GM12878 (cell line): ENCODE measurements at regions of chr2 and their contacts with region 1.

Region 1: DNA sequence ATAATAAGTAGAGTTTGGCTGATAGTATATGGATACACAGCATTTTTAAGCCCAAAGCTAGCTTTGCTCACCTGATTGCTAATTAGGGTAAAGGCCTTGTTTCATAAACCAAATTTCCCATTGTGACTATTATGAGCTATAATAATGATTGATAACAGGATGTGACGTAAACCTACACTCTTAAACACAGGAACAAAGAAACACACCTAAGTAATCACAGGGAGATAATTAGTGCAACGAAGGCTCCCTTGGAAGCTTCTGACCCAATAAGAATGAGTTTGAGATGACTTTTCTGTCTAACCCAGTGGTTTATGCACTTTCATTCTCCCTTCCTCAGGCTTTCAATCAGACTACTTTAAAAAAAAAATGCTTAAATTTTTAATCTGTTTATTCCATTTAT is 683.2 kb downstream of the SATB2 start:
- DNase-seq: no peak
- ATAC-seq: peak; percentile 84
- H3K4me3 ChIP-seq: no peak overlapping the region
- H3K27ac ChIP-seq: no peak overlapping the region
- H3K4me1 ChIP-seq: no peaks in the 10 kb centered on the region
- H3K27me3 ChIP-seq: no peaks in the 10 kb centered on the region
- CTCF ChIP-seq: no peak
- EP300 ChIP-seq: 0 out of 4 replicates have a peak, but pooled peaks of 1 of the 2 experiments have one; percentile 45
- POLR2A ChIP-seq: no peak
- RAD21 ChIP-seq: no peak

Region 2: DNA sequence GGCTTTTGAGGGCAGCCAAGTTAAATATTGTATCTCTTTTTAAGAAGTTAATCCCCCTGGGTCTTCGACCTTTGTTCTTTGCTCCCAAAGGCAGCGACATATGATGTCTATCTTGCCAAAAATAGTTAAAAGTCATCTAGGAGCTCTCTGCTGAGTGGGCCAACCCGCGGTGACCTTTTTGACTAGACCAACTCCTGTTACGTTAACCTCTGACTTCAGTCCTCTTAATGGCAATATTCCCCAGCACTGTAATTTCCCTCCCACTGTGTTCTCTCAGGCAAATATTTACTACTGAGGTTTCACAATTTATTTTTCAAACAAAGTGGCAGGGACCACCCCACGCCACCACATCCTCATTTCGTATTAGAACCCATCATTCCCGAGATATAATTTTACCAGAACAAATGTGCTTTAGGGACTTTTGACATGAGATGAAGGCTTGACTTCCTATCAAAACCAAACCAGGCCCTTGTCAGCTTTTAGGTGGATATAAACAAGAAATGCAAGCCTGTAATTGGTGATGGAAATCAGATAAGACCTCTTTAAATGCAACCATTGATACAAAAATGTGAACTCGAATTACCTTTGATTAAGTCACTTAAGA is 81.6 kb before region 1 on chr2:
- CTCF ChIA-PET with region 1: interaction called, 4 read pairs
- POLR2A ChIA-PET with region 1: no interaction called
- RAD21 ChIA-PET with region 1: interaction called, 33 read pairs
- SMC1A ChIA-PET with region 1: interaction called, 52 read pairs
- in situ Hi-C with region 1: no loop called
- intact Hi-C with region 1: no loop called
- DNase-seq: no peak
- ATAC-seq: peak; percentile 77
- H3K4me3 ChIP-seq: no peak overlapping the region
- H3K27ac ChIP-seq: no peak overlapping the region
- H3K4me1 ChIP-seq: no peaks in the 10 kb centered on the region
- H3K27me3 ChIP-seq: no peaks in the 10 kb centered on the region
- CTCF ChIP-seq: no peak
- EP300 ChIP-seq: no peak
- POLR2A ChIP-seq: no peak
- RAD21 ChIP-seq: no peak

Region 3: GRCh38 chr2:198706476-198707082 is 68.0 kb before region 1 on chr2:
- CTCF ChIA-PET with region 1: interaction called, 3 read pairs
- POLR2A ChIA-PET with region 1: interaction called, 3 read pairs
- RAD21 ChIA-PET with region 1: interaction called, 16 read pairs
- SMC1A ChIA-PET with region 1: interaction called, 26 read pairs
- in situ Hi-C with region 1: no loop called
- intact Hi-C with region 1: no loop called
- DNase-seq: no peak
- ATAC-seq: no peak
- H3K4me3 ChIP-seq: no peak overlapping the region
- H3K27ac ChIP-seq: no peak overlapping the region
- H3K4me1 ChIP-seq: no peaks in the 10 kb centered on the region
- H3K27me3 ChIP-seq: no peaks in the 10 kb centered on the region
- CTCF ChIP-seq: no peak
- EP300 ChIP-seq: no peak
- POLR2A ChIP-seq: no peak
- RAD21 ChIP-seq: no peak

Region 4: GRCh38 chr2:198749364-198749763 is 25.2 kb before region 1 on chr2:
- CTCF ChIA-PET with region 1: interaction called, 3 read pairs
- POLR2A ChIA-PET with region 1: interaction called, 3 read pairs
- RAD21 ChIA-PET with region 1: interaction called, 4 read pairs
- SMC1A ChIA-PET with region 1: interaction called, 11 read pairs
- in situ Hi-C with region 1: no loop called
- intact Hi-C with region 1: no loop called
- DNase-seq: no peak
- ATAC-seq: no peak
- H3K4me3 ChIP-seq: no peak overlapping the region
- H3K27ac ChIP-seq: no peak overlapping the region
- H3K4me1 ChIP-seq: no peaks in the 10 kb centered on the region
- H3K27me3 ChIP-seq: no peaks in the 10 kb centered on the region
- CTCF ChIP-seq: no peak
- EP300 ChIP-seq: no peak
- POLR2A ChIP-seq: no peak
- RAD21 ChIP-seq: no peak

Region 5: GRCh38 chr2:198788676-198789075 is 14.1 kb after region 1 on chr2:
- CTCF ChIA-PET with region 1: interaction called, 16 read pairs
- POLR2A ChIA-PET with region 1: interaction called, 3 read pairs
- RAD21 ChIA-PET with region 1: interaction called, 4 read pairs
- SMC1A ChIA-PET with region 1: interaction called, 130 read pairs
- in situ Hi-C with region 1: no loop called
- intact Hi-C with region 1: no loop called
- DNase-seq: no peak
- ATAC-seq: no peak
- H3K4me3 ChIP-seq: no peak overlapping the region
- H3K27ac ChIP-seq: no peak overlapping the region
- H3K4me1 ChIP-seq: no peaks in the 10 kb centered on the region
- H3K27me3 ChIP-seq: no peaks in the 10 kb centered on the region
- CTCF ChIP-seq: no peak
- EP300 ChIP-seq: no peak
- POLR2A ChIP-seq: no peak
- RAD21 ChIP-seq: no peak

Region 6: DNA sequence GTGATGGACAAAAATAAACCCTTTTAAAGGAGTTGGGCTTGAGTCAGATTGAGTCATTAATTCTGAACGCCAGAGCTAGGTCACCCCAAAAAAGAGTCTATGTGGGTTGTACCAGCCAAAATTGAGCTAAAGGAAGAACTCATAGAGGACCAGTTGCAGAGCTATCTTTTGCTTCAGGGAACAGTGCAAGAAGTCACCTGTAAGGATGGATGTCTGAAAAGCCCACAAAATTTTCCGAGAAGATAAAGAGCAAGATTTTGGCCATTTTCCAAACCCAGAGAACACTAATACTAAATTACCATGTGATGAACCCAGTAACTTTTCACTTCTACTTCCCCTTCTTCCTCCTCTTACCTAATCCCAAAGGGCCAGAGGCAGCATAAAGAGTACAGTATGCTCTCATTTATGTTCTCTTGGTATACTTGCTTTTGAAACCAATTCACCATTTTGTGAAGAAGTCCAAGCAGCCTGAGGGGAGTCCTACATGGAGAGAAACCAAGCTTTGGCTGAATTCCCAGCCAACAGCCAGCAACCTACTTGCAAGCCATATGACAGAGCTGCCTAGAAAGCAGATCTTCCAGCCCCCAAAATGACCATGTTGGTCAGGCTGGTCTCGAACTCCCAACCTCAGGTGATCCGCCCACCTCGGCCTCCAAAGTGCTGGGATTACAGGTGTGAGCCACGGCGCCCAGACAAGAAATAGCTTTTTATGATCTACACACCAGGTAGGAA is 131.5 kb after region 1 on chr2:
- CTCF ChIA-PET with region 1: interaction called, 4 read pairs
- POLR2A ChIA-PET with region 1: interaction called, 6 read pairs
- RAD21 ChIA-PET with region 1: interaction called, 8 read pairs
- SMC1A ChIA-PET with region 1: interaction called, 16 read pairs
- in situ Hi-C with region 1: no loop called
- intact Hi-C with region 1: no loop called
- DNase-seq: peak; percentile 45
- ATAC-seq: peak; percentile 91
- H3K4me3 ChIP-seq: no peak overlapping the region
- H3K27ac ChIP-seq: no peak overlapping the region
- H3K4me1 ChIP-seq: peaks cover 9% of the 10 kb centered on the region
- H3K27me3 ChIP-seq: no peaks in the 10 kb centered on the region
- CTCF ChIP-seq: no peak
- EP300 ChIP-seq: peak; percentile 69 to 73; a peak in 3 of 4 replicates
- POLR2A ChIP-seq: no peak
- RAD21 ChIP-seq: no peak

Region 7: GRCh38 chr2:199011908-199012307 is 237.3 kb after region 1 on chr2:
- CTCF ChIA-PET with region 1: no interaction called
- POLR2A ChIA-PET with region 1: no interaction called
- RAD21 ChIA-PET with region 1: no interaction called
- SMC1A ChIA-PET with region 1: no interaction called
- in situ Hi-C with region 1: no loop called
- intact Hi-C with region 1: no loop called
- DNase-seq: no peak
- ATAC-seq: no peak
- H3K4me3 ChIP-seq: no peak overlapping the region
- H3K27ac ChIP-seq: no peak overlapping the region
- H3K4me1 ChIP-seq: no peaks in the 10 kb centered on the region
- H3K27me3 ChIP-seq: no peaks in the 10 kb centered on the region
- CTCF ChIP-seq: no peak
- EP300 ChIP-seq: no peak
- POLR2A ChIP-seq: no peak
- RAD21 ChIP-seq: no peak